AG04449 (cell line): ENCODE measurements at regions of chr13 and their contacts with region 1.

Region 1: GRCh38 chr13:44165221-44165907 is 208.3 kb upstream of the SERP2 start:
- DNase-seq: no peak
- H3K4me3 ChIP-seq: no peak overlapping the region
- CTCF ChIP-seq: no peak

Region 2: DNA sequence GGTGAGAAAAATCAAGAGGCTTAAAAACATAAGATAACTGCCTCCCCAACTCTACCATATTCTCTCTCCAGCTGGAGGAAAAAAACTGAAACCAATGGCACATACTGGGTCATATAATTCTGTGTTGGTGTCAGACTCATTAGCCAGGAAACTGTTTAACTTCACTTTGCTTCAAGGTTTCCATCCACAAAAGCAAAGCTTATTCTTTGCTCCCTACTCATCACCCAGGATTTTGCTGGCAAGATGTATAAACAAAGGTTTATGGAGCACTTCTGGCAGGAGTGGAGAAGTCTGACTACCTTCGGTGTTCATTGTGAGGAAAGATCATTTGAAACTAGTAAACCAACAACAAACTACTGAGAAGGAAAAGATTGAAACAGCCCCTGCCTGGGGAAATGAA is 10.8 kb after region 1 on chr13:
- CTCF ChIA-PET with region 1: no interaction called
- POLR2A ChIA-PET with region 1: no interaction called
- DNase-seq: no peak
- H3K4me3 ChIP-seq: no peak overlapping the region
- CTCF ChIP-seq: no peak

Region 3: DNA sequence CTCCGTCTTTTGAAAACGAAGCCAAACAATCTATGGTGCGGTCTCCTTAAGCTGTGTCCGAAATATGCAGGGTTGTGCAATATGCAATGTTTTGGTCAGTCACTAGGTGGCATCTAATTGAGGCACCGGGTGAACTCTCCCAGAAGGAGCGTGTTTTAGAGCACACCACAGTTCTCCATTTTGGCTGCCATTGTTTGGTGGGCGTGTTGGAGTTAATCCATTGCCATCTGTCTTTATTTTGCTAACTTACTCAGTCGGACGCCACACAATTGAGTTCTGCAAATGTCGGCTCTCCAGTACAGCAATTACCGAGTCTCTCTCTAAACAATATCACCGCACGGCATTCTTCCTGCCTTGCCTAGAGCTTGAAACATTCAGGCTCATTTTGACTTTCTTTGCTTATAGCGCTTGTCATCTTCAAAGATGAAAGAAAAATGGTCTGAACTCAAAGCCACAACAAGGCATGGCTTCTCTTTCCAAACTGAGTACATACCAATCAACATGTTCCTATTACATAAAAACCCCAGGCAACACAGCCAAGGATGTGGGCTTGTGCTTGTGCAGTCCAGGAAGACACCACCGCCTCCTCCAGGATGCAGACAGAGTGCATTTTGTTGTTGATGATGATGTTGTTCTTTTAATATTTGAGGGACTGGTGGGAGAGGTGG is 26.3 kb after region 1 on chr13:
- CTCF ChIA-PET with region 1: interaction called, 12 read pairs
- POLR2A ChIA-PET with region 1: no interaction called
- DNase-seq: no peak
- H3K4me3 ChIP-seq: no peak overlapping the region
- CTCF ChIP-seq: peak; percentile 74